ENCODE measurements at regions of chr5 and their contacts with region 1.

Region 1: DNA sequence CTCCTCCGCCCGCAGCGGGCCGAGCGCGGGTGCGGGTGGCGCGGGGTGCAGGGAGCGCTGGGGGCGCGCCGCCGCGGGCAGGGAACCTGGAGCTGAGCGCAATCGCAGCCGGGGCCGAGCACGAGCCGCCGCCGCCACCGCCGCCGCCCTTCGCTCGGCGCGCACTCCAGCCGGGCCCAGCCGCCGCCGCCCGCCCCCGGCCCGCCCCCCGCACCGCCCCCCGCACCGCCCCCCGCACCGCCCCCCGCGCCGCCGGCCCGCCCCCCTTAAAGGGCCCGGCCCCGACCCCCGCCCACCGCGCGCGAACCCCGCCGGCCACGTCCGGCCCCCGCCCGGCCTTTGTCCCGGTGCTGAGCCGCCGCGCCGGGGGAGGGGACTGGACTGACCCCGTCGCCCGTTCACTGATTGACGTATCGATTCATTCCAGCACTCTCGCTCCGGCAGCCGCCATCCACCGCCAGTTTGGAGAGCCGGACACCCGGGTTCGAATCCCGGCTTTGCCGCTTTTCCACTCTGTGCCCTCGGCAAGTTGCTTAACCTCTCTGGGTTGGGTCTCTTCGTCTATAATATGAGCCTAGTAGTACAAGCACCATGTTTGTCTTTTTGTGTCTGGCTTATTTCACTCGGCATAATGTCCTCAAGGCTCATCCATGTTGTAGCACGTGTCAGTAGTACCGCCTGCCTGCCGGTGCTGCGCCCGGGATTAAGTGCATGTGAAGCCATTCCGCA is at the start of gene SH3PXD2B:
- DNase-seq: peak; percentile 61 to 80 (median 79)
- H3K4me3 ChIP-seq: peak within 1 kb of the TSS; percentile 69
- H3K27ac ChIP-seq: peak within 1 kb of the TSS; percentile 68 to 91
- H3K4me1 ChIP-seq: peaks cover 19% of the 10 kb centered on the region
- H3K27me3 ChIP-seq: no peaks in the 10 kb centered on the region
- CTCF ChIP-seq: no peak
- EP300 ChIP-seq: no peak
- POLR2A ChIP-seq: peak; percentile 59
- total RNA-seq, gene SH3PXD2B: 13.0 to 71.8 (median 61.1) TPM

Region 2: DNA sequence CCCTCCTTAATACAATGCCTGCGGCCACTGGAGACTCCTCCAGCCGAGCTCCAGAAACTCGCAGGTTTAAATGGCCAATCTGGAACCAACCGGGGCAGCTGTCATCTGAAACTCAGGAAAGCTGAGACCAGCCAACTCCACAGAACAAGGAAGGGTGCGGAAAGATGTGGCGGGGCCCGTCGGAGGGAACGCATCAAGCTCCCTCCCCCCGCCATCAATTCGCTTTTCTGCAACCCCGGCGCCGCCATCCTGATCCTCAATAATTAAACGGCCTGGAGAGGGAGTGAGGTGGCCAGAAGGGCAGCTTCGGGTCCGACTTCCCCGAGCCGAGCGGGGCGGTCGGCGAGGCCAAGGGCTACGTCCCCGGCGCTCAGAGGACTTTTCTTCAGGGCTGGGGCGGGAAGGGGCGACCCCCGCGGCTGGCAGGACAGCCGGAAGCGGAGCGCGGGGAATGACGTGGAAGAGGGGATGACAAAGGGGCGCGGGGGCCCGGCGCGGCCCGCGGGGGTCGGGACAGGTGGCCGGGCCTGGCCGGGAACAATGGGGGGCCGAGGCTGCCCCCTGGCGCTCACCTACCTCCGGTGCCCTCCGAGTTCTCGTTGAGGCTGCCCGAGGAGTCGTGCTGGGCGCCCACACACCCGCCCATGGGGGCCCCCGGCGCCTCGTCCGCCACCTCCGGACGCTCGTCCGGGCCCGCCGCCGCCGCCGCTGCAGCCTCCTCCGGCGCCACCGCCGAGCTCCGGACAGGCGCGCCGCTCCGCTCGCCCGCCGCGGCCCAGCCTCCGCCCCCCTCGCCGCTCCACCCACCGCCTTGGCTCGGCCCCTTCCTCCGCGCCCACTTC is 171.3 kb before region 1 on chr5 and contains the start of gene UBTD2:
- intact Hi-C with region 1: loop called in 3 of 4 experiments (anchors 5 kb)
- DNase-seq: peak; percentile 82 to 89 (median 85)
- H3K4me3 ChIP-seq: peak within 1 kb of the TSS; percentile 55
- H3K27ac ChIP-seq: peak within 1 kb of the TSS; percentile 86 to 90
- H3K4me1 ChIP-seq: peaks cover 4% of the 10 kb centered on the region
- H3K27me3 ChIP-seq: no peaks in the 10 kb centered on the region
- CTCF ChIP-seq: peak; percentile 27 to 48 (median 38)
- EP300 ChIP-seq: no peak
- POLR2A ChIP-seq: no peak
- total RNA-seq, gene UBTD2: 21.4 to 31.5 (median 28.6) TPM

Region 3: DNA sequence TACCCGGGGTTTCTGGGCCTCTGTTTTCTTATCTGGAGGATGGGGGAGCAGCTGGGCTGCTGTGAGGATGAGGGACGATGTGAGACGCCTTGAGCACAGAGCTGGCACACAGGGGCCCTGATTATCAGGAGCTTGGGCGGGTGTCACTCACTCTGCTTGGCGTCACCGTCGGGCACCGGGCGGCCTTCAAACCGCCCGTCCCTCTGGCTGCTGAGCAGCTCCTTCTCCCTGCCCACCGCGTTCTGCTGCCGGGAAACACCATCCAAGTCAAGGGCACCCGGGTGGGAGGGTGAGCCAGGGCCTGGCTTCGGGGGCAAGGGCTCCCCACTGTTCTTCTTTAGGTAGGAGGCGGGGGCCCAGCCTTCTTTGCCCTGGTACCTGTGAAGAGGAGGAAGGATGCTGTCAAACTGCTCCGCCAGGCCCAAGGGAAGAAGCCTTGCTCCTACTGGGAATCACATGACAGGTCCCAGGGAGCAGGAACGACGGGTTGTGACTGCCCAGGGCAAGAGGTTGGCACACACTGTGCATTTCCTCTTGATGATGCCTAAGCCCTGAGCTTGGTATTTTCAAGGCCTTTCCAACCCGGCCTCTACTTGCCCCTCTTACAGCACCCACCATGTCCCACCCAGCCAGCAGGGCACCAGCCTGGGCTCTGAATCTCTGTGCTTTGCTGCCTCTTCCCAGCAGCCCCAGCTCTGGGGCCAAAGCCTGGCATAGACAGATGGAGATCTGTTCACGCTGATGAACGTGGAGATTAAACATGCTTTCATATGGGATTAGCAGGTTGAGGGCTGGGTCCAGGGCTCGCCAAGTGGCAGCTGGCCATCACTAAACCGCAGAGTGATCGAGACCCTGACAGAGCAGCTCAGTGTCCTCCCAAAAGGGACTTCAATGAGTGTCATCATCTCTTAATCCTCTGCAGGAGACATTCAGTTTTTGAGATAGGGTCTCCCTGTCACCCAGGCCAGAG is 104.0 kb before region 1 on chr5:
- intact Hi-C with region 1: loop called in 1 of 4 experiments (anchors 5 kb)
- DNase-seq: no peak
- H3K4me3 ChIP-seq: no peak overlapping the region
- H3K27ac ChIP-seq: no peak overlapping the region
- H3K4me1 ChIP-seq: peaks cover 3% of the 10 kb centered on the region
- H3K27me3 ChIP-seq: no peaks in the 10 kb centered on the region
- CTCF ChIP-seq: no peak
- EP300 ChIP-seq: no peak
- POLR2A ChIP-seq: no peak

Region 4: GRCh38 chr5:172403189-172403796 is 51.2 kb before region 1 on chr5:
- intact Hi-C with region 1: loop called in 2 of 4 experiments (anchors 10 kb)
- DNase-seq: peak; percentile 93 to 97 (median 95)
- H3K4me3 ChIP-seq: no peak overlapping the region
- H3K27ac ChIP-seq: peak overlapping the region; percentile 67 to 96
- H3K4me1 ChIP-seq: peaks cover 20% of the 10 kb centered on the region
- H3K27me3 ChIP-seq: no peaks in the 10 kb centered on the region
- CTCF ChIP-seq: peak in 1 of 3 donors; percentile 10
- EP300 ChIP-seq: no peak
- POLR2A ChIP-seq: no peak

Region 5: GRCh38 chr5:172417983-172418630 is 36.4 kb before region 1 on chr5:
- intact Hi-C with region 1: loop called in 2 of 4 experiments (anchors 5 kb)
- DNase-seq: peak; percentile 93 to 98 (median 96)
- H3K4me3 ChIP-seq: no peak overlapping the region
- H3K27ac ChIP-seq: peak overlapping the region; percentile 81 to 94
- H3K4me1 ChIP-seq: peaks cover 47% of the 10 kb centered on the region
- H3K27me3 ChIP-seq: no peaks in the 10 kb centered on the region
- CTCF ChIP-seq: no peak
- EP300 ChIP-seq: peak; percentile 93
- POLR2A ChIP-seq: peak; percentile 32

Region 6: GRCh38 chr5:172533399-172534228 is 79.1 kb after region 1 on chr5:
- intact Hi-C with region 1: no loop called
- DNase-seq: peak in 1 of 5 donors; percentile 51
- H3K4me3 ChIP-seq: no peak overlapping the region
- H3K27ac ChIP-seq: no peak overlapping the region
- H3K4me1 ChIP-seq: peaks cover 10% of the 10 kb centered on the region
- H3K27me3 ChIP-seq: no peaks in the 10 kb centered on the region
- CTCF ChIP-seq: no peak
- EP300 ChIP-seq: no peak
- POLR2A ChIP-seq: no peak

Region 7: GRCh38 chr5:172868924-172869591 is 414.5 kb after region 1 on chr5:
- intact Hi-C with region 1: no loop called
- DNase-seq: peak; percentile 84 to 92 (median 87)
- H3K4me3 ChIP-seq: no peak overlapping the region
- H3K27ac ChIP-seq: peak overlapping the region; percentile 63 to 76
- H3K4me1 ChIP-seq: peaks cover 56% of the 10 kb centered on the region
- H3K27me3 ChIP-seq: no peaks in the 10 kb centered on the region
- CTCF ChIP-seq: peak in 2 of 3 donors; percentile 59 to 64
- EP300 ChIP-seq: peak; percentile 95
- POLR2A ChIP-seq: no peak